HCT116 (cell line): ENCODE measurements at regions of chr13 and their contacts with region 1.

Region 1: GRCh38 chr13:45367358-45367757 is 26.4 kb upstream of the TPT1 start:
- DNase-seq: peak; percentile 95
- ATAC-seq: peak; percentile 91
- H3K4me3 ChIP-seq: peak overlapping the region; percentile 11 to 31; a peak in 2 of 4 replicates
- H3K27ac ChIP-seq: peak overlapping the region; percentile 71
- H3K4me1 ChIP-seq: peaks cover 23 to 61% of the 10 kb centered on the region in 2 experiments
- H3K27me3 ChIP-seq: no peaks in the 10 kb centered on the region
- CTCF ChIP-seq: no peak
- POLR2A ChIP-seq: no peak
- RAD21 ChIP-seq: no peak

Region 2: GRCh38 chr13:45340422-45340925 is 26.9 kb before region 1 on chr13:
- CTCF ChIA-PET with region 1: interaction called, 6 read pairs
- POLR2A ChIA-PET with region 1: interaction called, 15 read pairs
- RAD21 ChIA-PET with region 1: interaction called in 1 of 2 experiments, 3 read pairs
- intact Hi-C with region 1: no loop called
- DNase-seq: peak; percentile 58
- ATAC-seq: peak; percentile 33
- H3K4me3 ChIP-seq: peak overlapping the region; percentile 61 to 62
- H3K27ac ChIP-seq: peak overlapping the region; percentile 95
- H3K4me1 ChIP-seq: peaks cover 27 to 54% of the 10 kb centered on the region in 2 experiments
- H3K27me3 ChIP-seq: no peaks in the 10 kb centered on the region
- CTCF ChIP-seq: 0 out of 6 replicates have a peak, but pooled peaks of 1 of the 3 experiments have one; percentile 22
- POLR2A ChIP-seq: no peak
- RAD21 ChIP-seq: no peak

Region 3: GRCh38 chr13:45393941-45394570 is 26.7 kb after region 1 on chr13:
- CTCF ChIA-PET with region 1: interaction called, 13 read pairs
- POLR2A ChIA-PET with region 1: no interaction called
- RAD21 ChIA-PET with region 1: no interaction called
- intact Hi-C with region 1: no loop called
- DNase-seq: peak; percentile 45
- ATAC-seq: peak; percentile 99
- H3K4me3 ChIP-seq: no peak overlapping the region
- H3K27ac ChIP-seq: no peak overlapping the region
- H3K4me1 ChIP-seq: no peaks in the 10 kb centered on the region
- H3K27me3 ChIP-seq: no peaks in the 10 kb centered on the region
- CTCF ChIP-seq: peak; percentile 43 to 80 (median 65); a peak in 4 of 6 replicates
- POLR2A ChIP-seq: no peak
- RAD21 ChIP-seq: peak; percentile 63

Region 4: GRCh38 chr13:45490068-45490467 is 122.7 kb after region 1 on chr13:
- CTCF ChIA-PET with region 1: interaction called, 3 read pairs
- POLR2A ChIA-PET with region 1: no interaction called
- RAD21 ChIA-PET with region 1: no interaction called
- intact Hi-C with region 1: loop called (anchors 10 kb)
- DNase-seq: no peak
- ATAC-seq: peak; percentile 84
- H3K4me3 ChIP-seq: no peak overlapping the region
- H3K27ac ChIP-seq: no peak overlapping the region
- H3K4me1 ChIP-seq: no peaks in the 10 kb centered on the region
- H3K27me3 ChIP-seq: no peaks in the 10 kb centered on the region
- CTCF ChIP-seq: peak; percentile 28 to 54 (median 34); a peak in 4 of 6 replicates
- POLR2A ChIP-seq: no peak
- RAD21 ChIP-seq: peak; percentile 49; the same call in 1 of the 2 replicates

Region 5: DNA sequence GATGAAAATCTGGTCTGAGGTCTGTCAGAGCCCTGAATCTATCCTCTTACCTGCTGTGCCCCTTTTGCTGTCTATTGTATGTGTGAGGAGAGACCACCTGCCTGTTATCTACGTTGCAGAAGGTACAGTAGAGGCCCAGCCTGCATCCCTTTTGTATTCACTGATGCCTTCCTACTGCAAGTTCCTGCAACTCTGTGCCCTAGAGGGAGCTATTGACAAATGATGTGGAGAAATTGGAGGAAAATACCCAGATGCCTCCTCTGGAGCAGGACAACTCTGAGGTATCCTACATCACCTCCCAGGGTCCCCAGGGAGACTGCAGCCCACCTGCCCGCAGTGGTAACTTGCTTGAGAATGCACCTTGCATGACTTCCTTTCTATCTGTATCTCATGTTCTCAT is 450.5 kb after region 1 on chr13:
- CTCF ChIA-PET with region 1: no interaction called
- POLR2A ChIA-PET with region 1: no interaction called
- RAD21 ChIA-PET with region 1: no interaction called
- intact Hi-C with region 1: loop called (anchors 10 kb)
- DNase-seq: no peak
- ATAC-seq: peak; percentile 73
- H3K4me3 ChIP-seq: no peak overlapping the region
- H3K27ac ChIP-seq: no peak overlapping the region
- H3K4me1 ChIP-seq: no peaks in the 10 kb centered on the region
- H3K27me3 ChIP-seq: no peaks in the 10 kb centered on the region
- CTCF ChIP-seq: peak; percentile 17 to 40 (median 38); a peak in 5 of 6 replicates
- POLR2A ChIP-seq: no peak
- RAD21 ChIP-seq: peak; percentile 57